ENCODE measurements at regions of chr1 and their contacts with region 1.

Region 1: DNA sequence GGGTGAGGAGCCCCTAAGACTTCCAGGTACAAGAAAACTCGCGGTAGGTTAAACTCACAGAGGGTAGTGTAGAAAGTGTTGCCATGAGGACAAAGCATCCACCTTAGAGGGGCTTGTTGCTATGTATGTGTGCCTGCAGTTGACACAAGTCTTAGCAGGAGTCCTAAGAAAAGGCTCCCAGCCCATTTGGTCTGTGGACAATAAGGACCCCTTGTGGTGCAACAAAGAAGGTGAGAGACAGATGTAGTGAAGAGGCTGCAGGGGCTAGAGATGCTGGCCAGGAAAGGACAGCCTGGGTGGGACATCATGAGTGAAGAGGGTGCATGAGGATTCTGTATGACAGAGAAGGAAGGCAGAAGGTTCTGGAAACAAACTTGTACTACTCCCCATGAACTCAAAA is 36.3 kb upstream of the IL10 start:
- DNase-seq: peak in 1 of 2 donors; percentile 34
- ATAC-seq: peak in 7 of 8 donors; percentile 68 to 85 (median 75)
- H3K4me3 ChIP-seq: no peak overlapping the region
- H3K27ac ChIP-seq: no peak overlapping the region
- H3K4me1 ChIP-seq: peaks cover 0 to 17% (median 0%) of the 10 kb centered on the region in 9 donors
- H3K27me3 ChIP-seq: peaks cover 0 to 4% (median 0%) of the 10 kb centered on the region in 7 donors
- CTCF ChIP-seq: peak in 8 of 9 donors; percentile 21 to 56 (median 48)

Region 2: DNA sequence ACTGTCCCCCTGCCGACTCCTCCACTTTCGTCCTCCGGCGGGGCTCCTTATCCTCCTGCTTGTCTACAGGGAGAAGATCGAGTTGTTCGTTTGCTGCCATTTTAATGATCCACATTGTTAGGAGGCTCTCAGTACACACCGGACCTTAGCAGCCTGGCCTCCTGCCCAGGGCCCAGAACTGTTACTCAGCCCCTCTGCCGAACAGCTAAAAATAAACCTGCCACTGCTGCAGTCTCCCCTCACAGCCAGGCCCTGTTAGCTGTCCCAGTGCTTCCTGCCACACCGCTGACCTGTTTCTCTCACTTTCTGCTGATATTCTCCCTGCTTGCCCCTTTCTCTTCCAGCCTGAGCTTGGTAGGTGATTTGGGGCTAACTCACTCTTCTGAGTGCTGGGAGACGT is 115.6 kb before region 1 on chr1:
- intact Hi-C with region 1: no loop called
- DNase-seq: peak; percentile 84 to 85
- ATAC-seq: peak; percentile 74 to 92 (median 86)
- H3K4me3 ChIP-seq: peak overlapping the region in 6 of 10 donors; percentile 4 to 21 (median 16)
- H3K27ac ChIP-seq: peak overlapping the region; percentile 80 to 99 (median 96)
- H3K4me1 ChIP-seq: peaks cover 53 to 100% (median 100%) of the 10 kb centered on the region in 9 donors
- H3K27me3 ChIP-seq: no peaks in the 10 kb centered on the region
- CTCF ChIP-seq: no peak

Region 3: GRCh38 chr1:206734499-206735142 is 74.0 kb before region 1 on chr1:
- intact Hi-C with region 1: loop called in 5 of 10 experiments (anchors 5 to 10 kb)
- DNase-seq: peak in 1 of 2 donors; percentile 37
- ATAC-seq: peak in 5 of 8 donors; percentile 14 to 31 (median 24)
- H3K4me3 ChIP-seq: no peak overlapping the region
- H3K27ac ChIP-seq: peak overlapping the region in 1 of 10 donors; percentile 70
- H3K4me1 ChIP-seq: peaks cover 10 to 65% (median 44%) of the 10 kb centered on the region in 9 donors
- H3K27me3 ChIP-seq: no peaks in the 10 kb centered on the region
- CTCF ChIP-seq: peak; percentile 42 to 79 (median 65)

Region 4: GRCh38 chr1:206865013-206865671 is 56.5 kb after region 1 on chr1 and contains the start of gene IL20:
- intact Hi-C with region 1: loop called in 1 of 10 experiments (anchors 10 kb)
- DNase-seq: peak; percentile 66
- ATAC-seq: peak; percentile 25 to 89 (median 76)
- H3K4me3 ChIP-seq: no peak within 1 kb of the TSS
- H3K27ac ChIP-seq: no peak within 1 kb of the TSS
- H3K4me1 ChIP-seq: peaks cover 0 to 7% (median 0%) of the 10 kb centered on the region in 9 donors
- H3K27me3 ChIP-seq: peaks cover 0 to 21% (median under 1%) of the 10 kb centered on the region in 7 donors
- CTCF ChIP-seq: peak; percentile 49 to 87 (median 70)
- total RNA-seq, gene IL20: not detected

Region 5: DNA sequence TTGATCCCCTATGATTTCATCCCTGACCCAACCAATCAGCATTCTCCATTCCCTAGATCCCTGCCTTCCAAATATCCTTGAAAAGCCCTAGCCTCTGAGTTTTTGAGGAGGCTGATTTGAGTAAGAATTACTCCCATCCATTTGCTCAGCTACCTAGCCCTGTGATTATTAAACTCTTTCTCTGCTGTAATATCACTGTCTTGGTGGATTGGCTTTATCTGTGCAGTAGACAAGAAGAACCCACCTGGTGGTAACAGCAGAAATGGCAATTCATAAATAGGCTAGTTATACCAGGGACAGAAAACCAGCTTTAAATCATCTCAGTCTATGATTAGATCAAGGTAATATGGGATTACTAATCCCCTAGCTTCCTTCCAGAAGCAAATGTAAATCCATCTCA is 69.8 kb after region 1 on chr1:
- intact Hi-C with region 1: no loop called
- DNase-seq: no peak
- ATAC-seq: no peak
- H3K4me3 ChIP-seq: no peak overlapping the region
- H3K27ac ChIP-seq: no peak overlapping the region
- H3K4me1 ChIP-seq: no peaks in the 10 kb centered on the region
- H3K27me3 ChIP-seq: no peaks in the 10 kb centered on the region
- CTCF ChIP-seq: no peak

Region 6: GRCh38 chr1:206982216-206982615 is 173.6 kb after region 1 on chr1:
- intact Hi-C with region 1: loop called in 1 of 10 experiments (anchors 10 kb)
- DNase-seq: peak; percentile 24 to 45
- ATAC-seq: peak; percentile 49 to 87 (median 74)
- H3K4me3 ChIP-seq: no peak overlapping the region
- H3K27ac ChIP-seq: no peak overlapping the region
- H3K4me1 ChIP-seq: no peaks in the 10 kb centered on the region
- H3K27me3 ChIP-seq: peaks cover 0 to 27% (median 4%) of the 10 kb centered on the region in 7 donors
- CTCF ChIP-seq: peak; percentile 16 to 68 (median 57)

Measured in heart right ventricle (tissue), 16 donors.